ENCODE measurements at regions of chr3 and their contacts with region 1.

Region 1: DNA sequence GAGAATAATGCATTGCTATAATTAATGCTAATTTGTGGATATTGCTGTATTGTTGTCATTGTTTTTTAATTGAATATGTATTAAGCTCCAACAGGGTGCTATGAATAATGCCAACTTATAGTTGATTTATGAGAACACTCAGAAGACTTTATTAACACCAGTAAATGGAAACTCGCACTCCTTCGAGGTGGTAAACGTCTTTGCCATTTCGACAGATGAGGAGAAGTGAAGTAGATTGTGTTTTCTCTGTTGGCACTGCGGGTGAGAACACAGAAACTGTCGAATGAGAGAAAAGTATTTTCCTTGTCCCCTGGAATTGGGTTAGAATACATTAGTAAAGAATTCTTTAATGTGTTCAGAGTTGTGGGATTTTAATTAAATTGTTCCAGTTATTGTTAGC is 354.5 kb downstream of the LPP start:
- DNase-seq: no peak
- ATAC-seq: no peak
- H3K4me3 ChIP-seq: no peak overlapping the region
- H3K4me3 Mint-ChIP-seq: no peak overlapping the region
- H3K27ac ChIP-seq: no peak overlapping the region
- H3K27ac Mint-ChIP-seq: no peak overlapping the region
- H3K4me1 ChIP-seq: peaks cover 8% of the 10 kb centered on the region
- H3K4me1 Mint-ChIP-seq: peaks cover 14% of the 10 kb centered on the region
- H3K27me3 ChIP-seq: no peaks in the 10 kb centered on the region
- H3K27me3 Mint-ChIP-seq: no peaks in the 10 kb centered on the region
- CTCF ChIP-seq: no peak

Region 2: DNA sequence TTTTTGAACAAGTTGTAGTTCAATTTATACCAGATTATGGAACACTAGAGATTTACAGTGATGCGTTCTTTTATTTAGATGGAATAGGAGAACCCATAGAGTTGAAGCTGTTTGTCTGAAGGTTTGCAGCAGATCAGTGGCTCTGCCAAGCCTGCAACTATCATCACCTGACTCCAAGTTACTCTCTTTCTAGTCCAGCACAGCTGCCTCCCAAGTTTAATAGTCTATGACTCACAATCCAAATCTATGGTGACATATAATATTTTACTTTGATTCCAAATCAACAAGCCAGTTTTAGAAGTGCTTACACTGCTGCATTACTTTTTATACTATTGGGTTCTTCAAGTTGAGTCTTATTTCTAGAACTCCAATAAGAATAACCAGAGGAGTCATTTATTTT is 46.0 kb after region 1 on chr3:
- CTCF ChIA-PET with region 1: no interaction called
- POLR2A ChIA-PET with region 1: no interaction called
- intact Hi-C with region 1: loop called in 1 of 2 experiments (anchors 1 kb)
- DNase-seq: no peak
- ATAC-seq: no peak
- H3K4me3 ChIP-seq: no peak overlapping the region
- H3K4me3 Mint-ChIP-seq: no peak overlapping the region
- H3K27ac ChIP-seq: peak overlapping the region in 1 of 2 experiments; percentile 38
- H3K27ac Mint-ChIP-seq: no peak overlapping the region
- H3K4me1 ChIP-seq: peaks cover 5% of the 10 kb centered on the region
- H3K4me1 Mint-ChIP-seq: peaks cover 23% of the 10 kb centered on the region
- H3K27me3 ChIP-seq: no peaks in the 10 kb centered on the region
- H3K27me3 Mint-ChIP-seq: no peaks in the 10 kb centered on the region
- CTCF ChIP-seq: no peak

Region 3: DNA sequence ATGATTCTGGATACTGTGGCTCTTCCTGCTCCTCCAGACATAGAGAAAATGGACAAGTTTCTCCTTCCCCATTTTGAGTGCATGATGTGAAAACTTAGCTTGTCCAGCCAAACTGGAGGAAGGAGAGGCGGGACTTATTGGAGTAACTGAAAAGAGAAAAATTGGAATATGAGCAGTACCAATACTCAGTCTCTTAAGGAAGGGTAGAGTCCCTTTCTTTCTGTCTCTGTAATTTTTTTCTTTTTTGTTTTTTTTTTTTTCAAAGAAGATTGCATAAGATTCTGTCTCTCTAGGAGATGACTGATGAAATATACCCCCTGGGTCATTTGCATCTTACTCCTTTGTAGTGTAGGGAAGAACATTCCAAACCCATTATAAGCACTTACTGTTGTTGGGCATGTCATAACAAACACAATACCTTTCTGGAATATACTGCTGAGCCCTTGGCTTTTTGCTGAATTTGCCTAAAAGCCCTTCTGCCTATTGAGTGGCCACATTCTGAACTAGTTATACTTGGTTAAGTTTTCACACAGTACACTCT is 165.3 kb after region 1 on chr3:
- CTCF ChIA-PET with region 1: no interaction called
- POLR2A ChIA-PET with region 1: no interaction called
- intact Hi-C with region 1: no loop called
- DNase-seq: no peak
- ATAC-seq: no peak
- H3K4me3 ChIP-seq: no peak overlapping the region
- H3K4me3 Mint-ChIP-seq: no peak overlapping the region
- H3K27ac ChIP-seq: no peak overlapping the region
- H3K27ac Mint-ChIP-seq: no peak overlapping the region
- H3K4me1 ChIP-seq: no peaks in the 10 kb centered on the region
- H3K4me1 Mint-ChIP-seq: peaks cover 5% of the 10 kb centered on the region
- H3K27me3 ChIP-seq: no peaks in the 10 kb centered on the region
- H3K27me3 Mint-ChIP-seq: no peaks in the 10 kb centered on the region
- CTCF ChIP-seq: no peak

Measured in CD8-positive, alpha-beta T cell (primary cell).